ENCODE measurements at regions of chr1 and their contacts with region 1.

Region 1: GRCh38 chr1:36223993-36224536 is at the start of gene THRAP3:
- DNase-seq: peak; percentile 96
- H3K4me3 ChIP-seq: peak within 1 kb of the TSS; percentile 85
- H3K27me3 ChIP-seq: no peaks in the 10 kb centered on the region
- CTCF ChIP-seq: no peak
- polyA plus RNA-seq, gene THRAP3: 45.8 and 69.0 TPM in 2 replicates

Region 2: DNA sequence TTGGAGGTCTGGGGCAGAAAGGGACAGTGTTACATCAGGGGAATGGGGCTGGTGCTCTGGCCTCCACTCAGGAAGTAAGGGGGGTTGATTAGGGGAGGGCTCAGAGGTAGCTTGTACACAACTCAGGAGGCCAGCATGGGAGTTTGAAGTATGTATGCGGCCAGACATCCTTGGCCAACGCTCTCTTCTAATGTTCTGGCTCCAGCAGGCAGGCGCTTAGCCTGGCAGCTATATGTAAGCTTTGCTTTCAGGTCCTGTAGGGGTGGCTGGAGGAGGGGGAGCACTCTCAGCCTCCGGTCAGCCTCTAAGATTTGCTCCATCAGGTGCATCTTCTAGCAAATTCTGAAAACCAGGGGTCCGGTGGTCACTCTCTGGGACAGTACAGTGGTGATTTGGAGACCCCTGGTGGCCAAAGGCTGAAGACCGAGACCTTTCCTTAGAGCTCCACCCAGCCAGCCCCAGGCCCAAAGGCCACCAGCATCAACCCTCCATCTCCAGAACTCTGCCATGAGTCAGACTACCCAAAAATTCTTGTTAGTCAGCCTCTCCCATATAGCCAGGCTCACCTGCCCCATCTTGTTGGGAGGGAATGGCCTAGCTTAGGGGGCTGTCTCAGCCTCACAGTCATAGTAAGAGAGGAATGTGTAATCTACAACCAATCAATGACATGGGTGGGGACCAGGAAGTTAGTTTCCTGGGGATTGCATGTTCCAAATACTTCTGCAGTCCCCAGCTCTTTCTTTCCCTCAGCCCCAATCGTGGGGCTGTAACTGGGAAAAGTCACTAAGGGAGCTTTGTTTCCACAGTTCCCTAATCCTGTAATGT is 89.3 kb before region 1 on chr1:
- CTCF ChIA-PET with region 1: interaction called, 10 read pairs
- POLR2A ChIA-PET with region 1: no interaction called
- DNase-seq: no peak
- H3K4me3 ChIP-seq: no peak overlapping the region
- H3K27me3 ChIP-seq: no peaks in the 10 kb centered on the region
- CTCF ChIP-seq: peak; percentile 79

Region 3: DNA sequence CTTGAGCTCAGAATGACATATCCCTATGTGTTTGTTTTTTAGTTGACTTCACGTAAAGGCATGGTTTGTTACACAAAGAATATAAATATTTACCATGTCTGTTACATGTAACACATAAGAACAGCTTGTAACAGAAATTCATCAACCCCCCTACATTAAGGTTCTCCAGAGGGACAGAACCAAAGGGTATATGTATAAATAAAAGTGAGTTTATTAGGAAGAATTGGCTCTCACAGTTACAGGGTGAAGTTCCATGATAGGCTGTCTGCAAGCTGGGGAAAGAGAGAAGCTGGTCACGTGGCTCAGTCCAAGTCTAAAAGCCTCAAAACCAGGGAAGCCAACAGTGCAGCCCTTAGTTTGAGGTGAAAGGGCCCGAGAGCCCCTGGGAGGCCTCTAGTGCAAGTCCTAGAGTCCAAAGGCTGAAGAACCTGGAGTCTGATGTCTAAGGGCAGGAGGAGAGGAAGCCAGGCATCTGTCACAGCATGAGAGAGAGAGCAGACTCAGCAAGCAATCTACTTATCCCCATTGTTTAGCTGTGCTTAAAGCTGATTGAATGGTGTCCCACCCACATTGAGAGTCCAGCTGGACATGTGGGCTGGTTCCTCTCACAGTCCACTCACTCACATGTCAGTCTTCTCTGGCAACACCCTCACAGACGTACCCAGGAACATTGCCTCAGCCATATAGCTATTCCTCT is 16.0 kb after region 1 on chr1:
- CTCF ChIA-PET with region 1: interaction called, 12 read pairs
- POLR2A ChIA-PET with region 1: interaction called, 7 read pairs
- DNase-seq: no peak
- H3K4me3 ChIP-seq: no peak overlapping the region
- H3K27me3 ChIP-seq: no peaks in the 10 kb centered on the region
- CTCF ChIP-seq: no peak

Region 4: DNA sequence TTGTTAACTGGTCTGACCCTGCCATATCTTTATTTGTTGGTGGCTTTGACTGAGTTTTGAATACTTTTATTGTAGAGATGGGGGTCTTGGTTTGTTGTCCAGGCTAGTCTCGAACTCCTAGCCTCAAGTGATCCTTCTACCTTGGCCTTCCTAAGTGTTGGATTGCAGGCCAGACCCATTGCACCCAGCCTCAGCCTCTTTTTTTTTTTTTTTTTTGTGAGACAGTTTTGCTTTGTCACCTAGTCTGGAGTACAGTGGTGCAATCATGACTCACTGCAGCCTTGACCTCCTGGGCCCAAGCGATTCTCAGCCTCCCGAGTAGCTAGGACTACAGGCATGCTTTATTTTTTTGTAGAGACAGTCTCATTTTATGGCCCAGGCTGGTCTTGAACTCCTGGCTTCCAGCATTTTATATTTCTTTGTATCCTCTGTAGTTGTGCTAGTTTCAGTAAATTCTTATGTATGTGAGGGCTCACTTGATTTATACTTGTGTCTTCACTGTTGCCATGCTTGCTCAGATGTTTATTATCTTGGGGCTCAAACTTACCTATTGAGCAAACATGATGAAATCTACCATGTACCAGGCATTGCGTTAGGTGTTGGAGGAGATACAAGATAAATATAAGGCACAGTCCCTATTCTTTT is 24.3 kb after region 1 on chr1:
- CTCF ChIA-PET with region 1: interaction called, 12 read pairs
- POLR2A ChIA-PET with region 1: no interaction called
- DNase-seq: peak; percentile 72
- H3K4me3 ChIP-seq: no peak overlapping the region
- H3K27me3 ChIP-seq: no peaks in the 10 kb centered on the region
- CTCF ChIP-seq: no peak

Region 5: GRCh38 chr1:36285448-36286101 is 61.5 kb after region 1 on chr1:
- CTCF ChIA-PET with region 1: interaction called, 10 read pairs
- POLR2A ChIA-PET with region 1: no interaction called
- DNase-seq: no peak
- H3K4me3 ChIP-seq: no peak overlapping the region
- H3K27me3 ChIP-seq: no peaks in the 10 kb centered on the region
- CTCF ChIP-seq: peak; percentile 68

Region 6: GRCh38 chr1:36350659-36351226 is 126.7 kb after region 1 on chr1:
- CTCF ChIA-PET with region 1: no interaction called
- POLR2A ChIA-PET with region 1: no interaction called
- DNase-seq: no peak
- H3K4me3 ChIP-seq: no peak overlapping the region
- H3K27me3 ChIP-seq: no peaks in the 10 kb centered on the region
- CTCF ChIP-seq: no peak